Activated B cell treated with CpG ODN at 0.5 μM for 24 hours (primary cell): ENCODE measurements at regions of chr2 and their contacts with region 1.

Region 1: DNA sequence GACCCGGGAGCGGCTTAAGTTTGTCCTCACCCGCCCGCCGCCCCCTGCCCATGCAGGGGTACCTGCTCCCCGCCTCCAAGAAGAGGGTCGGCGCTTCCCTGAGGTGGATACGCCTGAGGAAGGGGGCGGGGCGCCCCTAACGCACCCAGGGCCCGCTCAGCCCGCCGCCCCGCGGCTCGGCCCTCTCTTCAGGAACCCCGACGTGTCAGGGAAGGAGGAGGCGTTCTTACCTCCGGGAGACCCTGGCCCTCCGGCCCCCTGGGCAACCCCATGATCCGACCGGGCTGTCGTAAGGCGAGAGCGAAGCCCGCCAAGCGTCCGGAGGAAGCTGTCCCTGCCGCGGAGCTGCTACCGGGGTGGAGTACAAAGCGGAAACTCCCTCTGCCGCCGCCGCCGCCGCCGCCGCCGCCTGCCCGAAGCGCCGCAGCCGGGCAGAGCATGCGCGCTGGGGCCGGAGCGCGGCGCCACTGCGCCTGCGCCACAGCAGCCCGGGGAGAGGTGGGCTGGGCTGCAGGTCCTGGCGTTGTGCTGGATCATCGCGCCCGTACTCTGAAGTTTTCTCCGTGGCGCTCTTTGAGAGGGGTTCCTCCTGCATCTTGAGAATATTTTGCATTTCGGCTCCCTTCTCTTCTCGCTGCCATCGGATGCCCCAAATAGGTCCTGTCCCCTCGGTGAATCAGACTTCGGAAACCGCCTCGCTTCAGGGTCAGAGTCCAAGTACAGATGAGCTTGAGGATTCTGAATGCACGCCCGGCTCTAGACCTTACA is at the start of gene CCDC93:
- DNase-seq: peak; percentile 94
- ATAC-seq: peak; percentile 82
- H3K4me3 Mint-ChIP-seq: peak within 1 kb of the TSS; percentile 95
- H3K27ac Mint-ChIP-seq: peak within 1 kb of the TSS; percentile 91
- H3K4me1 Mint-ChIP-seq: peaks cover 33% of the 10 kb centered on the region
- H3K27me3 Mint-ChIP-seq: peaks cover 9% of the 10 kb centered on the region
- CTCF ChIP-seq: no peak
- total RNA-seq, gene CCDC93: 35.5 and 38.8 TPM in 2 replicates

Region 2: GRCh38 chr2:118003396-118003824 is 10.5 kb before region 1 on chr2:
- CTCF ChIA-PET with region 1: interaction called, 32 read pairs
- POLR2A ChIA-PET with region 1: interaction called, 16 read pairs
- intact Hi-C with region 1: loop called (anchors 1 kb)
- DNase-seq: peak; percentile 17
- ATAC-seq: peak; percentile 96
- H3K4me3 Mint-ChIP-seq: no peak overlapping the region
- H3K27ac Mint-ChIP-seq: no peak overlapping the region
- H3K4me1 Mint-ChIP-seq: peaks cover 4% of the 10 kb centered on the region
- H3K27me3 Mint-ChIP-seq: no peaks in the 10 kb centered on the region
- CTCF ChIP-seq: peak; percentile 60

Region 3: DNA sequence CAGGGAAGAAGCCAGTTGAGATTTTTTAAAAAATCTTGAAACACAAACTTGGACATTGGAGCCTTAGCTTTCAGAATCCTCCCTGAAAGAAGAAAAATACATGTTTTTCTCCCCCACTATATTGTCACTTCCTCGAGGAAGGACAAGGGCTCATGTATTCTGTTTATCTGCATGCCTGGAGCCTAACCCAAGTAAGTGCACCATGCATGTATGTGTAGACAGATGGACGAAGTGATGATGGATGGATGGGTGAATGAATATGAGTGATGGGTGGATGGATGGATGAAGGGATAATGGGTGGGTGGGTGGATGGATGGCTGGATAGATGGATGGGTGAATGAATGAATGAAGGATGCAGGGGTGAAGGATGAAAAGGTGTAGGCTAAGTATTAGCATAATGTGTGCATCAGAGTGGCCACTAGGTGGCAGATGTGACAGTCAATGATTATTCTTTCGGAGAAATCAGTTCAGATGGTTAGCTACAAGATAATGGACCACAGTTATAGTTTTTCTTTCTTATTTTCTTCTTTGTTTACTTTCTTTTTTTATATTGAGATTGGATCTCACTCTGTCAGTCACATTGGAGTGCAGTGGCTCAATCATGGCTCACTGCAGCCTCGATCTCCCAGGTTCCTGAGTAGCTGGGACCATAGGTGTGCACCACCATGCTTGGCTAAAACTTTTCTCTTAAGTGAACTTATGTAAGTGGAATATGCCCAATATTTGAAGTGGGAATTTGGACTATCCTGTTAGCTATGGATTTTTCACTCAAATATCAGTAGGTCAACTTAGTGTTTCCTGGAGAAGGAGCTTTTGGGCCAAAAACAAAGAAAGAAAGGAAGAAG is 18.5 kb after region 1 on chr2:
- CTCF ChIA-PET with region 1: interaction called, 10 read pairs
- POLR2A ChIA-PET with region 1: no interaction called
- intact Hi-C with region 1: no loop called
- DNase-seq: no peak
- ATAC-seq: peak; percentile 77
- H3K4me3 Mint-ChIP-seq: no peak overlapping the region
- H3K27ac Mint-ChIP-seq: no peak overlapping the region
- H3K4me1 Mint-ChIP-seq: peaks cover 14% of the 10 kb centered on the region
- H3K27me3 Mint-ChIP-seq: peaks cover 24% of the 10 kb centered on the region
- CTCF ChIP-seq: peak; percentile 24

Region 4: GRCh38 chr2:118056165-118056534 is 42.2 kb after region 1 on chr2:
- CTCF ChIA-PET with region 1: no interaction called
- POLR2A ChIA-PET with region 1: interaction called, 12 read pairs
- intact Hi-C with region 1: loop called (anchors 1 kb)
- DNase-seq: peak; percentile 34
- ATAC-seq: peak; percentile 89
- H3K4me3 Mint-ChIP-seq: peak overlapping the region; percentile 66
- H3K27ac Mint-ChIP-seq: peak overlapping the region; percentile 90
- H3K4me1 Mint-ChIP-seq: peaks cover 63% of the 10 kb centered on the region
- H3K27me3 Mint-ChIP-seq: no peaks in the 10 kb centered on the region
- CTCF ChIP-seq: no peak

Region 5: DNA sequence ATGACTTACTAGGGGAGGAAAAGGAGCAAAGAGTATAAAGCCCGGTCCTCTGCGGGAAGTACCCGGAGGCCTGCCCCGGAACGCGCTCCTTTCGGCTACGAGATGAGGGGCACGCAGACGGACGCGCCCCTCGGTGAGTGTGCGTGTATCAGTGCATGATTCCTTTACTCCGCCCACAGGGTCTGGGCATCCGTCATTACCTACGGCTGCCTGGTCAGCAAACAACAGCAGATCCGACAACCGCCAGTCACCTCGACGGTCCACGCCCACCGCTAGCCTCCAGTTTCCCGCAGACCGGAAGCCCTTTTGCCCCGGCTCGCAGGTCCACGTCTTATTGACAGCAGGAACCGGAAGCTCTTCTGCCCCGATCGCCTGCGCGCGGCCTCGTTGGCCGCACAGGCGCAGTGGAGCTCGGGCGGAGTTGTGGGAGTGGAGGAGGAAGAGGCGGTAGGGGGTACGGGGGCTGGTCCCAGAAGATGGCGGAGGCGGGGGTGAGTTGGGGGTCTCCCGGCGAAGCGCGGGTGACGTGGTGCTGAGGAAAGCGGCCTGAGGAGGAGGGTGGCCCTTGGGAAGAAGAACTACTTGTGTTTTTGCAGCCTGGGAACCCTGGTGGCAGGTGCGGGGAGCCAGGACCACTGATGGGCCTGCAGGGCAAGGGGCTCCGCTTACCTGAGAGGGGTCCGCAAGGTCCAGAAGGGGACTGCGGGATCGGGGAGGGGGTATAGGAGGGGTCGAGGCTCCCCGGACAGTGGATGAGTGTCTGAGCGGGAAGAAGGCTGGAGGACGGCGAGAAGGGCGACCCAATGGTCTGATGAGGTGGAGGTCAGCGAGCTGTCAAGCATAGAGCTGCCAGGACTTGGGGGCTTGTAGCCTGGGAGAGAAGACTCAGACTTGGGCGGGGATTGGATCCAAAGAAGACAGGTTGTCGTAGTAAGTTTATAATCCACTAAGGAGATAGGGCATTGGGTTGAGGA is 74.4 kb after region 1 on chr2 and contains the start of gene INSIG2:
- CTCF ChIA-PET with region 1: interaction called, 3 read pairs
- POLR2A ChIA-PET with region 1: interaction called, 6 read pairs
- intact Hi-C with region 1: loop called (anchors 1 kb)
- DNase-seq: peak; percentile 88
- ATAC-seq: peak; percentile 84
- H3K4me3 Mint-ChIP-seq: peak within 1 kb of the TSS; percentile 94
- H3K27ac Mint-ChIP-seq: peak within 1 kb of the TSS; percentile 84
- H3K4me1 Mint-ChIP-seq: peaks cover 32% of the 10 kb centered on the region
- H3K27me3 Mint-ChIP-seq: no peaks in the 10 kb centered on the region
- CTCF ChIP-seq: no peak
- total RNA-seq, gene INSIG2: 16.8 and 16.9 TPM in 2 replicates

Region 6: GRCh38 chr2:118186110-118186857 is 172.4 kb after region 1 on chr2:
- CTCF ChIA-PET with region 1: no interaction called
- POLR2A ChIA-PET with region 1: interaction called, 6 read pairs
- intact Hi-C with region 1: loop called (anchors 2 kb)
- DNase-seq: peak; percentile 81
- ATAC-seq: peak; percentile 95
- H3K4me3 Mint-ChIP-seq: peak overlapping the region; percentile 97
- H3K27ac Mint-ChIP-seq: peak overlapping the region; percentile 98
- H3K4me1 Mint-ChIP-seq: peaks cover 16% of the 10 kb centered on the region
- H3K27me3 Mint-ChIP-seq: peaks cover under 1% of the 10 kb centered on the region
- CTCF ChIP-seq: no peak